Heart left ventricle (tissue), 16 donors: ENCODE measurements at regions of chr1 and their contacts with region 1.

Region 1: DNA sequence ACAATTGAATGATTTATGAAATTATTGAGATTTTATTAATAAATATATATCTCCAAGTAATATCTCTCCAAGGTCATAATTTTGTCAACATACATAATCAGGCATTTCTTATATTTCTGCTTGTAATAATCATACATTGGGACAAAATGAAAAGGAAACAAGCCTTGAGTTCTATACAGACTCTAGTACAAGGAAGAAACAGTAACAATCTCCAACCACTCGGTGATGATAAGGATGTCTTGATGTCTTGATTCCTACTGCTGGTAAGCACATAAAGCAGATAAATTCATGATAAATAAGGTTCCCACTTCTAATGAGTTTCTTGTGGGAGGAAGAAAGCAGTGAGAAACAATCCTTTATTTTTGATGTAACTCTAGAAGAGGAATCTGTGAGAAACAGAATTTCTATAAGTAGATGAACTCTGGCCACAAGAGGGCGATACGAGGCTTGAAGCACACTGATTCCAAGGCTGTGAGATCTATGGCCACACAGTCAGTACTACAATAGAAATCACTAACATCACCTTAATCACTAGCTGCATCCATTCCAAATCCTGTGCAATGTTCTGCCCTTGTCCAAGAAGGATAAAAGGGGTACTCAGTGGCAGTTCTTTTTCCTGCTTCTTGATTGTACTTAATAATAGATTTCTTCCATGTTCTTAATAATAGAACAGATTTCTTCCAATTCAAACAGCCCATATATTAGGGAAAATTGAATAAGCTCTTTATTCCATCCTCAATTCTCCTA is 41.4 kb upstream of the LRRC8B start:
- DNase-seq: peak; percentile 64 to 82 (median 76)
- ATAC-seq: peak in 3 of 4 donors; percentile 71 to 85 (median 80)
- H3K4me3 ChIP-seq: no peak overlapping the region
- H3K27ac ChIP-seq: no peak overlapping the region
- H3K4me1 ChIP-seq: no peaks in the 10 kb centered on the region
- H3K27me3 ChIP-seq: no peaks in the 10 kb centered on the region
- CTCF ChIP-seq: peak; percentile 71 to 90 (median 80)
- POLR2A ChIP-seq: no peak

Region 2: GRCh38 chr1:89433421-89433820 is 49.8 kb before region 1 on chr1:
- intact Hi-C with region 1: no loop called
- DNase-seq: no peak
- ATAC-seq: no peak
- H3K4me3 ChIP-seq: no peak overlapping the region
- H3K27ac ChIP-seq: no peak overlapping the region
- H3K4me1 ChIP-seq: no peaks in the 10 kb centered on the region
- H3K27me3 ChIP-seq: no peaks in the 10 kb centered on the region
- CTCF ChIP-seq: no peak
- POLR2A ChIP-seq: no peak

Region 3: GRCh38 chr1:89512996-89513720 is 30.0 kb after region 1 on chr1:
- intact Hi-C with region 1: no loop called
- DNase-seq: no peak
- ATAC-seq: no peak
- H3K4me3 ChIP-seq: no peak overlapping the region
- H3K27ac ChIP-seq: no peak overlapping the region
- H3K4me1 ChIP-seq: peaks cover 0 to 10% (median 3%) of the 10 kb centered on the region in 12 donors
- H3K27me3 ChIP-seq: no peaks in the 10 kb centered on the region
- CTCF ChIP-seq: no peak
- POLR2A ChIP-seq: no peak

Region 4: DNA sequence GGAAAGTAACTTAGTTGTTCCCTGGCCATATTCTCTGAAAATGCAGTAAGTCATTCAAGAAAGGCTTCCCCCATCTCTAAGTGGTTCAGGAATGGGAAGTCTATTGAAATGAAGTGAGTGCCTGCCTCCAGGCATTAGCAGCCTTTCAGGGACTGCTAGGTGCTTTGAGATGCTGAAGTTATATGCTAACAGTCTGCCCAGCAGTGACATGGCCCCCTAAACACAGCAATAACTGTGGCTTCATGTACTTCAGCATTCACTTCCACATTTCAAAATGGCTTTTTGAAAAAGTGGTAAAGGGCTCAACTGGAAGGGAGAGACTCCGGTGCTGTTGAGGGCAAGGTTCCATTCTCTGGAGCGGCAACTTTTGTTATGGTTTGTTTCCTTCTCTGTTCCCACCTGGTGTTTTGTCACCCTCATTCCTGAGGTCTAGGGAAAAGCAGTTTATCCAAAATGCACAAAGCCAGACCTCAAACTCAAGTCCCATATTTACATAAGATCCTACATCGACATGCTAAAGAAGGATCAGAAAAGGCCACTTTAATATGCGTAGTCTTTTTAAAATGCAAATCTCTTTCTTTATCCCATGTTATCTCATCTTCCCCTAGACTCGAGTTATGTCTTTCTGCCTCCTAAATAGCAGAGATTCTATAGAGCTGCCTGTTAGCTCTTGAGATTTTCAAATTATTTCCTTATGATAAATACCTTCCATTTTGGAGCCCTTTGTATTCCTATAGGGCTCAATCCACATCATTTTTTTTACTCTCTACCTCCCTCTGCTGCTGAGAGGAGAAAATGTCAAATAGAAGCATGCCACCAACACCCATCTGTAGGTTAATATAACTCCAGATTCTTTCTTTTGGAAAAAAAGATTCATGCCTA is 115.5 kb after region 1 on chr1:
- intact Hi-C with region 1: loop called (anchors 1 to 5 kb)
- DNase-seq: no peak
- ATAC-seq: peak in 3 of 4 donors; percentile 68 to 72 (median 69)
- H3K4me3 ChIP-seq: no peak overlapping the region
- H3K27ac ChIP-seq: no peak overlapping the region
- H3K4me1 ChIP-seq: peaks cover 0 to 19% (median 5%) of the 10 kb centered on the region in 12 donors
- H3K27me3 ChIP-seq: no peaks in the 10 kb centered on the region
- CTCF ChIP-seq: peak; percentile 51 to 79 (median 69)
- POLR2A ChIP-seq: no peak

Region 5: DNA sequence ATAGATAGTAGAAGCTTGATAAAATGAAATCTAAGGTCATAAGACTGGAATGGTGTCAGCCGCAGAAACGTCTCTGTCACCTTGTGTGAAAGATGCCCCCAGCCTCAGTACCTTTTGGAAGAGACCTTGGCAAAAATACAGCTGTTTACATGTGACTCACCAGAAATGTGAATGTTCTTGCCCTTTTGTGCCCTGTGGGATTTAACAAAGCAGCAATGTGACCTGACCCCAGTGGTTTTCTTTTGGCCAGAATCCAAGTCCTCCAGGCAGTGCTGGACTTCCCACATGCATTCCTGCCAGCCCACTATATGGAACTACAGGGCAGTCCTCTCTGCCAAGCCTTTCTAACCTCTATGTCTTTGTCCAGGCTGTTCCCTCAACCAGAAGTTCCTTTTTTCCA is 122.5 kb after region 1 on chr1:
- intact Hi-C with region 1: loop called in 1 of 10 experiments (anchors 5 kb)
- DNase-seq: no peak
- ATAC-seq: no peak
- H3K4me3 ChIP-seq: no peak overlapping the region
- H3K27ac ChIP-seq: peak overlapping the region in 4 of 12 donors; percentile 9 to 26 (median 20)
- H3K4me1 ChIP-seq: peaks cover 13 to 79% (median 58%) of the 10 kb centered on the region in 12 donors
- H3K27me3 ChIP-seq: no peaks in the 10 kb centered on the region
- CTCF ChIP-seq: no peak
- POLR2A ChIP-seq: no peak

Region 6: GRCh38 chr1:89994805-89995597 is 511.8 kb after region 1 on chr1 and contains the start of gene ZNF326:
- intact Hi-C with region 1: loop called in 1 of 10 experiments (anchors 10 kb)
- DNase-seq: peak; percentile 96 to 98 (median 96)
- ATAC-seq: peak; percentile 97 to 99 (median 99)
- H3K4me3 ChIP-seq: peak within 1 kb of the TSS; percentile 66 to 97 (median 91)
- H3K27ac ChIP-seq: peak within 1 kb of the TSS; percentile 86 to 98 (median 96)
- H3K4me1 ChIP-seq: peaks cover 0 to 40% (median 26%) of the 10 kb centered on the region in 12 donors
- H3K27me3 ChIP-seq: no peaks in the 10 kb centered on the region
- CTCF ChIP-seq: peak in 2 of 12 donors; percentile 18 to 31
- POLR2A ChIP-seq: peak; percentile 86 to 96
- total RNA-seq, gene ZNF326: 4.9 to 14.7 (median 10.1) TPM